SK-N-SH (cell line): ENCODE measurements at regions of chr1 and their contacts with region 1.

Region 1: DNA sequence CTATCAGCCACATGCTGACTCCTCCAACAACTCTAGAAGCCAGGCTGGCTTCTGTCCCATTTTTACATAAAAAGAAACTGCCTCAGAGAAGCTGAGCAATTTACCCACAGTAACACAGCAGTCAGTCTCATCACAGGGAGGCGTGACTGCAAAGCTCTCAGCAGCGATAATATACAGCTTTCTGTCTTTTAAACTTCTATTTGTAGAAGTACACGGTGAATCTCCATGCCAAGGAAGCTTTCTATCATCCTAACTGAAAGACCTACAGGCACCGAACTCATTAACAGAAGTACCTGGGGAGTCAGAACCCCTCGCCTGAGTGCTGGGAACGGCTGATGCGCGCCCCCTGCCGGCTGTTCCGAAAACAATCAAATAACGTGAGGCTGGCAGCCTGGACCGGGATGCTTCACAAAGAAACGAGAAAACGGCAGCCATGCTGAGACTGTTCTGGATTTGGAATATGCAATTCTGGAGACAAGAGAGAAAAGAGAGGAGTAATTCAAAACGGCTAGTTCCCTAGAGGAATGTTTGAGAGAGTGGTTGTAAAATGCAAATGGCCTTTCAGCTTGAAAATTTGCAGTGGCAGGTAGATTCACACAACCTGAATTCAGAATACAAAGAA is 43.5 kb upstream of the RAB4A start:
- DNase-seq: peak; percentile 87
- H3K4me3 ChIP-seq: peak overlapping the region in 1 of 2 experiments; percentile 38; a peak in 1 of 4 replicates
- H3K27ac ChIP-seq: no peak overlapping the region
- H3K4me1 ChIP-seq: peaks cover 6 to 7% of the 10 kb centered on the region in 2 experiments; a peak in 3 of 4 replicates
- H3K27me3 ChIP-seq: peaks cover 6% of the 10 kb centered on the region; the same call in 1 of the 2 replicates
- CTCF ChIP-seq: peak; percentile 95
- EP300 ChIP-seq: no peak
- RAD21 ChIP-seq: peak; percentile 95

Region 2: GRCh38 chr1:228664399-228664914 is 563.0 kb before region 1 on chr1:
- CTCF ChIA-PET with region 1: interaction called, 78 read pairs
- POLR2A ChIA-PET with region 1: no interaction called
- DNase-seq: peak; percentile 72
- H3K4me3 ChIP-seq: no peak overlapping the region
- H3K27ac ChIP-seq: no peak overlapping the region
- H3K4me1 ChIP-seq: no peaks in the 10 kb centered on the region
- H3K27me3 ChIP-seq: no peaks in the 10 kb centered on the region
- CTCF ChIP-seq: peak; percentile 94
- EP300 ChIP-seq: no peak
- RAD21 ChIP-seq: peak; percentile 95

Region 3: GRCh38 chr1:228691926-228692325 is 535.5 kb before region 1 on chr1:
- CTCF ChIA-PET with region 1: interaction called, 53 read pairs
- POLR2A ChIA-PET with region 1: no interaction called
- DNase-seq: peak; percentile 45
- H3K4me3 ChIP-seq: no peak overlapping the region
- H3K27ac ChIP-seq: no peak overlapping the region
- H3K4me1 ChIP-seq: no peaks in the 10 kb centered on the region
- H3K27me3 ChIP-seq: no peaks in the 10 kb centered on the region
- CTCF ChIP-seq: peak; percentile 53
- EP300 ChIP-seq: no peak
- RAD21 ChIP-seq: peak; percentile 79

Region 4: GRCh38 chr1:228823200-228823599 is 404.2 kb before region 1 on chr1:
- CTCF ChIA-PET with region 1: no interaction called
- POLR2A ChIA-PET with region 1: no interaction called
- DNase-seq: no peak
- H3K4me3 ChIP-seq: no peak overlapping the region
- H3K27ac ChIP-seq: no peak overlapping the region
- H3K4me1 ChIP-seq: no peaks in the 10 kb centered on the region; a peak in 1 of 4 replicates
- H3K27me3 ChIP-seq: no peaks in the 10 kb centered on the region
- CTCF ChIP-seq: no peak
- EP300 ChIP-seq: no peak
- RAD21 ChIP-seq: no peak

Region 5: DNA sequence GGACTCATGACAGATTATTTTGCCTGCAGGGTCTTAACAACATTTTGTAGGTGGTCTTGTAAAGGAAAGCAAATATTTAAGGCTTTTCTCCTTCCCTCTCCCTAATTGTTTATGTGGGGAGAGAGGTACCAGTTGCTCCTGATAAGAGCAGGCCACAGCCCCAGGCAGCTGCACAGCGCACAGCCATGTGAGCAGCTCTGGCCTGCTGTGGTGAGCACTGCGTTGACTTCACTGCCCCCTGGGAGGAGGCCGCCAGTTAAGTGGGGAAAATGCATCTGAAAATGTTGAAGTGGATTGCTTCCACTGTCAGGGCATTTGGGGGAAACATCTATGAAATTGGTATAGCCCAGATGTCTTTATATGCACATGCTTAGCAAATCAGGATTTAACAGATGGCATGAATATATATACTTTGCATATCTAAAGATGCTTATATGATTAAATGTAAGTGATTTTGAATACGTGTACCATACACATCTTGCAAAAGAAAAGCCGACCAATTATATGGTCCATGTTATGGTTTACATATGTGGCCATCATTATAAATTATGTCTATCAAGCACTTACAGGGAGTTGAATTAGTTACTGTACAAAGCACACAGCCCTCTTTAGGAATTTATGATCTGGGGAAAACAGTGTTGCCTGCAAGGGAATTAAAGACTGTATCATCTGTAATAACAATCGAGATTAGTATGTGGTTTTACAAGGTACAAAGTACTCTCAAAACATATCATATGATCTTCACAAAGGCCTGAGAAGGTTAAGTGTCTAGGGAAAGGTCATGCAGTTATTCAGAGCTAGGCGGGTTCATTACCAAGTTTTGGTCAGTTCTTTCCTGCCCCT is 360.1 kb before region 1 on chr1:
- CTCF ChIA-PET with region 1: interaction called, 29 read pairs
- POLR2A ChIA-PET with region 1: no interaction called
- DNase-seq: peak; percentile 80
- H3K4me3 ChIP-seq: no peak overlapping the region
- H3K27ac ChIP-seq: peak overlapping the region in 1 of 2 experiments; percentile 94; a peak in 2 of 4 replicates
- H3K4me1 ChIP-seq: peaks cover 0 to 74% of the 10 kb centered on the region in 2 experiments; a peak in 2 of 4 replicates
- H3K27me3 ChIP-seq: no peaks in the 10 kb centered on the region
- CTCF ChIP-seq: no peak
- EP300 ChIP-seq: peak in 1 of 2 experiments; percentile 73; a peak in 2 of 4 replicates
- RAD21 ChIP-seq: peak; percentile 58

Region 6: DNA sequence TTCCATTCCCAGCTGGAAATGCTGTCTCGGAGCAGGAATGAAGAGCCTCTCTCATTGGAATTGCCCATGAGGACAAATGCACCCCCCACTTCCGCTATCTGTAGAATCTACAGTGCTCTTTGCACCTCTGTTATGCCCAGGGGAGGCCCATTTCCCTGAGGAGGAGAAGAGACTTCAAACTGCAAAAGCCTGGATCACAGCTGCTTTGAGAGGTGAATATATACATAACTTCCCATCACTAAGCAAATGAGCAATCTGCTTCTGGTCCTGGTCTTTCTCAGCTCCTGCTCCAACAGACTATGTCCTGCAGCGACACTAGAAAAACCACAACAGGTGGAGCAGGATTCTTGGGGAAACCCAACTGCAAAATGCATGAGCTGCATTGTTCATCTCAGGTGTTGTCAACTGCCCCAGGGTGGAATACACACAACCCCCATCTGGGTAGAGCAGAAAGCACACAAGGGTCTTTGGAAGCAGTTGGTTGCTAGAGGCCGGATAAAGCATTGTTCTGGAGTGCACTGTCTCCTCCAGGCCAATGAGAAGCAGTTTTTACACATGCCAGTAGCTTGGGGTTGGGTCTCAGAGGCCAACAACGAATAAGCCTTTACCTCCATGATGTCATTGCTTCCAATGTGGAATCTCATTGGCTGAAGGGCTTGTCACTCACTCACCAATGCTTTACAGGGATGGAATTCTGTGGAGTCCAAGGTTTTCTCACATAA is 24.2 kb before region 1 on chr1:
- CTCF ChIA-PET with region 1: interaction called, 18 read pairs
- POLR2A ChIA-PET with region 1: no interaction called
- DNase-seq: peak; percentile 55
- H3K4me3 ChIP-seq: no peak overlapping the region
- H3K27ac ChIP-seq: no peak overlapping the region
- H3K4me1 ChIP-seq: peaks cover 0 to 5% of the 10 kb centered on the region in 2 experiments; a peak in 2 of 4 replicates
- H3K27me3 ChIP-seq: no peaks in the 10 kb centered on the region; the same call in 1 of the 2 replicates
- CTCF ChIP-seq: no peak
- EP300 ChIP-seq: no peak
- RAD21 ChIP-seq: no peak

Region 7: DNA sequence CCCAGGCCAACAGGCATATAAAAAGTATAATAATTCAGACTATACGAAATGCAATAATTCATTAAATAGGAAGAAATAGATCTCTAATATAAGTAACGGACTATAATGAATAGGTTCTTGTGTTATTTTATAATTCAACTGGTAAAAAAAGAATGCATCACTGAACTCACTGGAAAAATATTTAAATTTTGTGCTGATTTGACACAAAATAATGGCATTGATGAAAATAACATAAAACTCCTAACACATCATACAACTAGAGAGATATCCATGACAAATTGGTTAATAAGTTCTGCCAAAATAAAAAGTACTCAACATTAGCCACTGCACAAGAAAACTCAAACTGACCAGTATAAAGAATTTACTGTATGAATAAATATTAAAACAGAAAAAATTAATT is 13.6 kb before region 1 on chr1:
- CTCF ChIA-PET with region 1: interaction called, 10 read pairs
- POLR2A ChIA-PET with region 1: no interaction called
- DNase-seq: no peak
- H3K4me3 ChIP-seq: no peak overlapping the region
- H3K27ac ChIP-seq: no peak overlapping the region
- H3K4me1 ChIP-seq: no peaks in the 10 kb centered on the region
- H3K27me3 ChIP-seq: no peaks in the 10 kb centered on the region
- CTCF ChIP-seq: no peak
- EP300 ChIP-seq: no peak
- RAD21 ChIP-seq: no peak

Region 8: GRCh38 chr1:229244091-229244490 is 16.7 kb after region 1 on chr1:
- CTCF ChIA-PET with region 1: interaction called, 10 read pairs
- POLR2A ChIA-PET with region 1: no interaction called
- DNase-seq: no peak
- H3K4me3 ChIP-seq: no peak overlapping the region
- H3K27ac ChIP-seq: no peak overlapping the region
- H3K4me1 ChIP-seq: no peaks in the 10 kb centered on the region
- H3K27me3 ChIP-seq: no peaks in the 10 kb centered on the region
- CTCF ChIP-seq: no peak
- EP300 ChIP-seq: no peak
- RAD21 ChIP-seq: no peak

Region 9: GRCh38 chr1:229474509-229474908 is 247.1 kb after region 1 on chr1:
- CTCF ChIA-PET with region 1: no interaction called
- POLR2A ChIA-PET with region 1: no interaction called
- DNase-seq: no peak
- H3K4me3 ChIP-seq: no peak overlapping the region
- H3K27ac ChIP-seq: no peak overlapping the region
- H3K4me1 ChIP-seq: no peaks in the 10 kb centered on the region
- H3K27me3 ChIP-seq: no peaks in the 10 kb centered on the region
- CTCF ChIP-seq: no peak
- EP300 ChIP-seq: no peak
- RAD21 ChIP-seq: no peak